Endothelial cell of umbilical vein (primary cell): ENCODE measurements at regions of chr3 and their contacts with region 1.

Region 1: GRCh38 chr3:173826906-173827609 is 429.5 kb downstream of the NLGN1 start:
- DNase-seq: no peak
- H3K4me3 ChIP-seq: no peak overlapping the region
- H3K27ac ChIP-seq: no peak overlapping the region
- H3K4me1 ChIP-seq: no peaks in the 10 kb centered on the region
- H3K27me3 ChIP-seq: no peaks in the 10 kb centered on the region
- CTCF ChIP-seq: no peak
- POLR2A ChIP-seq: no peak

Region 2: DNA sequence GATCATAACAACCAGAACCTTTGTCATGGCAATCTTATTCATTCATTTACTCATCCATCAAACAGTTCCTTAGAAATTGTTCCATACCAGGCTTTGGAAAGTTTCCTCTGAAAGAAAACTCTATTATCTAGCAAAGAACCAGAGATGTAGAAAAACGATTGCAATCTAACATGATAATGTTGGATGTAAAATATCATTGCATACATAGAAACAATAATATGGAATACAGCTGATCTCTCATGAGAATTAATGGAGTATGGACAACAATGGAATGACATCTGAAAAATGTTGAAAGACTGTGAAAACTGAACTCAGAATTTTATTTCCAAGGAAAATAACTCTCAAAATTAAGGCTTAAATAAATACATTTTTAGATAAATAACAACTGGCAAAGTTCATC is 235.9 kb after region 1 on chr3:
- CTCF ChIA-PET with region 1: no interaction called
- POLR2A ChIA-PET with region 1: no interaction called
- dilution Hi-C with region 1: no loop called
- intact Hi-C with region 1: no loop called
- DNase-seq: peak; percentile 9
- H3K4me3 ChIP-seq: no peak overlapping the region
- H3K27ac ChIP-seq: no peak overlapping the region
- H3K4me1 ChIP-seq: no peaks in the 10 kb centered on the region
- H3K27me3 ChIP-seq: no peaks in the 10 kb centered on the region
- CTCF ChIP-seq: no peak
- POLR2A ChIP-seq: no peak

Region 3: DNA sequence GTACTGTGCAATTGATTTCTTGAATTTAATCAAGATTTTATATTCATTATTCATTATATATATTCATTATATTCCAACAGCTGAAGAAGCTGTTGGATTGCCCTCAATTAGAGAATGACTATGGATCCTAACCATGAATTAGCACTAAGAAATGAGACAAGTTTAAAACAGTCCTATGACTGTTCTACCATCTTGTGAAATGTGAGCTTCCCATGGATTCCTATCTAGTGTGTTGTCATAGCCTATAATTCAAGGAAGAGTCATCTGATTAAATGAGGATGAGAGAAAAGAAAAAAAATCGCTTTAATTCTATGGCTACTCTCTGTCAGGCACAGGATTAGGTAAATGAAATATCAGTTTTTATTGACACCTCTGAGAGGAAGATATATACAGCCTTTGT is 335.5 kb after region 1 on chr3:
- CTCF ChIA-PET with region 1: no interaction called
- POLR2A ChIA-PET with region 1: interaction called, 13 read pairs
- dilution Hi-C with region 1: no loop called
- intact Hi-C with region 1: no loop called
- DNase-seq: no peak
- H3K4me3 ChIP-seq: no peak overlapping the region
- H3K27ac ChIP-seq: no peak overlapping the region
- H3K4me1 ChIP-seq: no peaks in the 10 kb centered on the region
- H3K27me3 ChIP-seq: no peaks in the 10 kb centered on the region
- CTCF ChIP-seq: no peak
- POLR2A ChIP-seq: no peak